MCF 10A (cell line): ENCODE measurements at regions of chr6 and their contacts with region 1.

Region 1: DNA sequence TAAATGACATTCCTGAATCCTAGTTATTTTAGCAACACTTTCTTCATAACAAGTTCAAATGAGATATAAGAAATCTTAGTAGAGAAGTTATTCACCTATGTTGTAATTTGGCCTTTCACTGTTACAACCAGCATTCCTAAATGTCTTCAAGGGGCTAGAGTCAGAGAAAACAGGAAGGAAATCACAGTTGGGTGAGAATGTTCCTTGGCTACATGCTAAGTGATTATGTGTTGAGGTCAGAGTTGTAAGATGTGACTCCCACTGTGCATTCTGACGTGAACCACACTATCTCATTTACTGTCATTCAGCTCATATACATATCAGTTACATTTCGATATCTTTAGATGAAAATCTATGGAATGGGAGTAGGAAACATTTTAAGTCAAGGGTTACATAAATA is 51.0 kb upstream of the MLIP start:
- DNase-seq: peak; percentile 5
- H3K4me3 Mint-ChIP-seq: no peak overlapping the region
- H3K27ac Mint-ChIP-seq: no peak overlapping the region
- H3K4me1 Mint-ChIP-seq: no peaks in the 10 kb centered on the region
- H3K27me3 Mint-ChIP-seq: no peaks in the 10 kb centered on the region
- CTCF ChIP-seq: no peak

Region 2: DNA sequence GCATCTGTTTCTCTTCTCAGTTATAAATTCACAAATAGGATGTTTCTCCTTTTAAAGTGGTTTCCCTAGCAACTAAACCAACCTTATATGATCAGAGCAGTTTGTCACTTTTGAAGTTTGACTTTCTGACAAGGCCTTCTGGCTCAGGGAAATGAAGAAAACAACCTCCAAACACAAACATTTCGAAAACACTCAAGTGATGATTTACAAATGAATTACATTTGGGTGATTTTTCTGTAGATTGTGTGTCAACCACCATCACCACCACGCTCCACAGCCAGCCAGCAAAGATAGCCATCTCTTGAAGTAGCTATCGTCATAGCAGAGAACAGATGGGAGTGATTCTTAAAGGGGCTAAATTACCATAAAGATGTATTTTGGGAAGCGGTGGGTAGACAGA is 34.5 kb after region 1 on chr6:
- CTCF ChIA-PET with region 1: interaction called, 3 read pairs
- POLR2A ChIA-PET with region 1: no interaction called
- intact Hi-C with region 1: loop called (anchors 1 kb)
- DNase-seq: no peak
- H3K4me3 Mint-ChIP-seq: no peak overlapping the region
- H3K27ac Mint-ChIP-seq: no peak overlapping the region
- H3K4me1 Mint-ChIP-seq: no peaks in the 10 kb centered on the region
- H3K27me3 Mint-ChIP-seq: no peaks in the 10 kb centered on the region
- CTCF ChIP-seq: no peak